ENCODE measurements at regions of chr5 and their contacts with region 1.

Region 1: GRCh38 chr5:150106674-150107426 is 20.5 kb upstream of the CSF1R start:
- DNase-seq: no peak
- ATAC-seq: peak; percentile 34; the same call in 2 of the 3 replicates
- H3K4me3 ChIP-seq: no peak overlapping the region
- H3K27ac ChIP-seq: no peak overlapping the region
- H3K4me1 ChIP-seq: peaks cover 14% of the 10 kb centered on the region
- H3K27me3 ChIP-seq: no peaks in the 10 kb centered on the region
- CTCF ChIP-seq: no peak
- EP300 ChIP-seq: no peak
- POLR2A ChIP-seq: no peak
- RAD21 ChIP-seq: no peak

Region 2: GRCh38 chr5:149852641-149853330 is 254.1 kb before region 1 on chr5:
- CTCF ChIA-PET with region 1: no interaction called
- POLR2A ChIA-PET with region 1: no interaction called
- RAD21 ChIA-PET with region 1: no interaction called
- SMC1A ChIA-PET with region 1: no interaction called
- in situ Hi-C with region 1: no loop called
- intact Hi-C with region 1: no loop called
- DNase-seq: no peak
- ATAC-seq: peak; percentile 96
- H3K4me3 ChIP-seq: no peak overlapping the region
- H3K27ac ChIP-seq: no peak overlapping the region
- H3K4me1 ChIP-seq: no peaks in the 10 kb centered on the region
- H3K27me3 ChIP-seq: no peaks in the 10 kb centered on the region
- CTCF ChIP-seq: peak; percentile 83 to 93 (median 87)
- EP300 ChIP-seq: no peak
- POLR2A ChIP-seq: no peak
- RAD21 ChIP-seq: peak; percentile 83

Region 3: DNA sequence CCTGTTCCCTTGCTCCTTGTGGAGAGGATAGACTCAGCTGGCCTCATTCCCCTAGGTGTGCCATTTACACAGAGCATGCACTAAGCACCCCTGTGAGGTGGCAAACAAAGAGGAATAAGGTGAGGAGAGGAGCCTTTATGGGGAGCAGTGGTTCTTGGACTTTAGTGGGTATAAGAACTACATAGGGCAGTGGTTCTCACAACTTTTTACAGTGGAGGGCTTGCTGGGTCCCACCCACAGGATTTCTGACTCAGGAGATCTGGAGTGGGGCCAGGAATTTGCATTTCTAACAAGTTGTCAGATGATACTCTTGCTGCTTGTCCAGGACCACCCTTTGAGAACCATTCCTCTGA is 62.5 kb before region 1 on chr5:
- CTCF ChIA-PET with region 1: no interaction called
- POLR2A ChIA-PET with region 1: no interaction called
- RAD21 ChIA-PET with region 1: no interaction called
- SMC1A ChIA-PET with region 1: no interaction called
- in situ Hi-C with region 1: no loop called
- intact Hi-C with region 1: loop called (anchors 5 kb)
- DNase-seq: no peak
- ATAC-seq: no peak
- H3K4me3 ChIP-seq: no peak overlapping the region
- H3K27ac ChIP-seq: no peak overlapping the region
- H3K4me1 ChIP-seq: no peaks in the 10 kb centered on the region
- H3K27me3 ChIP-seq: no peaks in the 10 kb centered on the region
- CTCF ChIP-seq: no peak
- EP300 ChIP-seq: no peak
- POLR2A ChIP-seq: no peak
- RAD21 ChIP-seq: no peak

Region 4: GRCh38 chr5:150227606-150228273 is 120.9 kb after region 1 on chr5:
- CTCF ChIA-PET with region 1: no interaction called
- POLR2A ChIA-PET with region 1: no interaction called
- RAD21 ChIA-PET with region 1: no interaction called
- SMC1A ChIA-PET with region 1: no interaction called
- in situ Hi-C with region 1: no loop called
- intact Hi-C with region 1: no loop called
- DNase-seq: no peak
- ATAC-seq: no peak
- H3K4me3 ChIP-seq: no peak overlapping the region
- H3K27ac ChIP-seq: no peak overlapping the region
- H3K4me1 ChIP-seq: no peaks in the 10 kb centered on the region
- H3K27me3 ChIP-seq: no peaks in the 10 kb centered on the region; a peak in 1 of 4 replicates
- CTCF ChIP-seq: no peak
- EP300 ChIP-seq: no peak
- POLR2A ChIP-seq: no peak
- RAD21 ChIP-seq: no peak